Endothelial cell of umbilical vein (primary cell): ENCODE measurements at regions of chr6 and their contacts with region 1.

Region 1: DNA sequence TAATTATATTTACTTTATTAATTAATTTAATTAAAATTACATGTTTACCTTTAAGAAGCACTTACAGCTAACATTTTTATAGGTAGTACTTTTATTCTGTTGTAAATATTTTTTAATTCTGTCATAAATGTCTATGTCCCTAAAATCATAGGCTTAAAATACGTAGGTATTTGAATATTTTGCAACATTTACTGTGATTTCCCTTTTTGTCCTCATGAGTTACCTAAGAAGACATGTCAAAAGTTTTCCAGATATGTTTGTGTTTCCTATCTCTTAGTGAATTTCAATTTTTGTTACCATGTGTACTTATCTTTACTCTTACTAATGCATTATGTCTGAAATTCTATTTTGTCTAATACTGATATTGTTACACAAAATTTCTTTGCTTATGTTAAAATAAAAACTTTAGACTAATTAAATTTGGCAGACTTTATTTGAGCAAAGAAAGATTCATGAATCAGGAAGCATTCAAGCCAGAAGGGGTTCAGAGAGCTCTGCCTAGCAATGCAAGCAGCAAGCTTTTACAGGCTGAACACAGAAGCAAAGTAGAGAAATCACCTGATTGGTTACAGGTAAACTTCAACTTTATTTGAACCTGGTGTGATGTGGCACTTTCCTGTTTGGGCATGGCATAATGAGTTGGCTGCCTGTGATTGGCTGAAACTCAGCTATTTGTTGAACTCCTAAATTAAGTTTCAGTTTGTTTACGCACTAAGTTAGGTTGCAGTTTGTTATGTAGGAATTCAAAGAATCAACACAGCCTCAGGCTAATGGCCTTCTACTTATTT is 123.2 kb upstream of the TMEM170B start:
- DNase-seq: peak; percentile 43
- H3K4me3 ChIP-seq: no peak overlapping the region
- H3K27ac ChIP-seq: no peak overlapping the region
- H3K4me1 ChIP-seq: peaks cover 35% of the 10 kb centered on the region
- H3K27me3 ChIP-seq: no peaks in the 10 kb centered on the region
- CTCF ChIP-seq: no peak
- POLR2A ChIP-seq: no peak

Region 2: DNA sequence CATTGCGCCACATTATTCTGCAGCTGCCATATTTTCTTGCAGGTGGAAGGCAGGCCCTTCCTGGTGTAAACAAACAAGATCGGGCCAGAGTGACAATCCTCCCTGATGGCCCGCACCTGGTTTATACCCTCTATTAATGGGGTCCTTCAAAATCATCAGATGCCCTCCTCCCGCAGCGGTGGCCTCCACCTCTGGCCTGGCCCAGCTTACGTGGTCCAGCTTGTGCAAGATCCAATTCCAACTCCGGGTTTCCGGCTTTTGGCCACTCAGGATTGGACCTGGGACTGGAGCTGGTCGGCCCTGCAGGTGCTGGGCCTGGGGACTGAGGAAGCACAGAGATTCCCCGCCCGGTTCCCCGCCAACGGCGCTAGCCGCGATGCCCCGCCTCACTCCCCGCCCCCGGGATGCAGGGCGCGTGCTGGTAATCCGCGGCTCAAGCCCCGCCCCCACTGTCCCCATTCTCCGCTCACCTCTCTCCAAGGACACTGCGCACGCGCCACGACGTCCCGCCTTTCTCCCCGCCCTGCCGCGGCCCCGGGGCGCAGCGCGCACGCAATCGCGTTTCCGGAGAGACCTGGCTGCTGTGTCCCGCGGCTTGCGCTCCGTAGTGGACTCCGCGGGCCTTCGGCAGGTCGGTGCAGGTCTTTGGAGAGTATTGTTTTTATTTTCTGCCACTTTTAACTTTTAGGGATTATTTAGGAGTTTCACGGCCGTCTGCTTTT is 667.0 kb before region 1 on chr6 and contains the start of gene TMEM14B:
- CTCF ChIA-PET with region 1: no interaction called
- POLR2A ChIA-PET with region 1: no interaction called
- dilution Hi-C with region 1: no loop called
- intact Hi-C with region 1: no loop called
- DNase-seq: peak; percentile 97
- H3K4me3 ChIP-seq: peak within 1 kb of the TSS; percentile 59 to 94 (median 91)
- H3K27ac ChIP-seq: peak within 1 kb of the TSS; percentile 81
- H3K4me1 ChIP-seq: peaks cover 16% of the 10 kb centered on the region
- H3K27me3 ChIP-seq: no peaks in the 10 kb centered on the region
- CTCF ChIP-seq: no peak
- POLR2A ChIP-seq: peak; percentile 94
- total RNA-seq, gene TMEM14B: 54.6 and 58.2 TPM in 2 replicates

Region 3: DNA sequence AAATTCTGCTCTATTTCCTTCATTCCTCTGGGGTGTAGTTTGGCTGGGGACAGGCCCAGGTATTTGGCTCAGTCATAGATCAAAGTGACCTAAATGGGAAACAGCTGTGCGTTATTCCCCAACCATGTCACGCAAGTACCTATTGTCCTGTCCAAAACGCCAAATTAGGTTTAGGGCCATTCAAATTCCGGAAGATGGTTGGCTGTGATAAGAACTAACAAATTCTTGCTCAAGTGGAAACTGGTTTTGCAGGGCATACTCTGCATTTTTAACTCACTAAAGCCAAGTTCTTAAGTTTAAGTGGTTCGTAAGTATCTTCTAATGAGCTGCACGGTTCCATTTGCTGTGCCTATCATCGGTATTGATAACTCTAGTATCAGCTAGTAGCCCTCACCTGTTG is 24.4 kb before region 1 on chr6:
- CTCF ChIA-PET with region 1: no interaction called
- POLR2A ChIA-PET with region 1: no interaction called
- dilution Hi-C with region 1: no loop called
- intact Hi-C with region 1: loop called (anchors 1 kb)
- DNase-seq: peak; percentile 83
- H3K4me3 ChIP-seq: no peak overlapping the region
- H3K27ac ChIP-seq: peak overlapping the region; percentile 68
- H3K4me1 ChIP-seq: peaks cover 28% of the 10 kb centered on the region
- H3K27me3 ChIP-seq: peaks cover 2 to 4% of the 10 kb centered on the region in 2 experiments
- CTCF ChIP-seq: no peak
- POLR2A ChIP-seq: no peak

Region 4: GRCh38 chr6:11439017-11439420 is 24.6 kb after region 1 on chr6:
- CTCF ChIA-PET with region 1: interaction called, 3 read pairs
- POLR2A ChIA-PET with region 1: no interaction called
- dilution Hi-C with region 1: no loop called
- intact Hi-C with region 1: loop called (anchors 1 kb)
- DNase-seq: peak; percentile 91
- H3K4me3 ChIP-seq: no peak overlapping the region
- H3K27ac ChIP-seq: peak overlapping the region; percentile 56
- H3K4me1 ChIP-seq: peaks cover 19% of the 10 kb centered on the region
- H3K27me3 ChIP-seq: no peaks in the 10 kb centered on the region
- CTCF ChIP-seq: no peak
- POLR2A ChIP-seq: no peak

Region 5: DNA sequence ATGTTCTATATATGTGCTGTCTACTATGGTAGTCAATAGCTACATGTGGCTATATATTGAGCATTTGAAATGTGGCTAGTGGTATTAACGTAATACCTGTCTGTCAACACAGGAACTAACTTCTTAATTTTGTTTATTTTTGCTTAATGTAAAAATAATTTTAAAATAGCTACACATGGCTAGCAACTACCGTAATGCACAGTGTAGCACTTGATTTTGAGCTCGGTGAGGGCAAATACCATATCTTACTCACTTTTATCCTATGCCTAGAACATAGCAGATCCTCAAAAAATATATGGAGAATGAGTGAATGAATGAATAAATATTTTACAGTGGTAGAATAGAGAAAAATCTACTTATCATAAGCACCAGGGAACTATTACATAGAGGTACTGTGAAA is 95.1 kb after region 1 on chr6:
- CTCF ChIA-PET with region 1: no interaction called
- POLR2A ChIA-PET with region 1: no interaction called
- dilution Hi-C with region 1: no loop called
- intact Hi-C with region 1: no loop called
- DNase-seq: no peak
- H3K4me3 ChIP-seq: no peak overlapping the region
- H3K27ac ChIP-seq: no peak overlapping the region
- H3K4me1 ChIP-seq: no peaks in the 10 kb centered on the region
- H3K27me3 ChIP-seq: no peaks in the 10 kb centered on the region
- CTCF ChIP-seq: no peak
- POLR2A ChIP-seq: no peak